Activated T-helper 1 cell treated with anti-CD3 and anti-CD28 coated beads, Interleukin-12 subunit alpha, Interleukin-12 subunit beta, Interleukin-2, Interleukin-4 antibody, amounts not matched to agents 30 ng/mL and 10 ng/mL and 1 ng/mL, durations not matched to agents 14 hours and 24 hours and 36 hours (primary cell): ENCODE measurements at regions of chr9 and their contacts with region 1.

Region 1: DNA sequence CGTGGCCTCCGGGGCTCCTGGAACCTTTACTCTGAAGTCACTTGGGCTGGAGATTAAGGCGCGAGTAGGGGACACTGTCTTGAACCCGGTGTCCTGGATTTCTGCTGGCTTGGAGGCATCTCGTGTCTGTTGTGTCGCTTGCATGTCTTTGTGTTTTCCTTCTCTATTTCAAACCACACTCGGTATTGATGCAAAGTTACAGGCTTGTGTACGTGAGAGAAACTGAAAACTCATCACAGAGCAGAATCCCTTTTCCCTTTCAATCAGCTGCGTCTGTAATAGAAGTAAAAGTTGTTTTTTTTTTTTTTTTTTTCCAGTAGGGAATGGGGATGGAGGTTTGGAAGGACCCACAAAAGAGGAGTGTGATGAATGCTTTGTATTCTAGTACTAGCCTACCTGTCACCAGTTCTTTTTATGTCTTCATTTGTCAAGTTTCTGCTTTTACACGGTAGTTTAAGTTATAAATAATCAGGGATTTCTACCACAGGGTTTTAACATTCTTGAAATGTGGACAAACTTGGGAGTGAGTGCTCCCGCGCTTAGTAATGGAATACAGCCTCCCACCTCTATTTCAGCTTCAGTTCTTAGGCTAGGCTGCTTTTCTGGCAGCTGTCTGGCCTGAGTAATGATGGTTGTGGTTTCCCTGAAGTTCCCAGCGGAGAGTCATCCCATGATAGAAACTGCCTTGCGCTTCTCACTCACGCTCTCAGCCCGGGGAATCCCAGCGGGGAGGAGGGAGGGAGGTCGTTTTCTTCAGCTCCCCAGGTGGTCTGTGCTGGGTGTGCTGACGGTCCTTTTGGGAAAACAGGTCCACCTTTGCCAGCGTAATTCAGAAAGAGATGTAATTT is 763 bp downstream of the TJP2 start:
- DNase-seq: peak; percentile 21
- H3K4me3 Mint-ChIP-seq: peak overlapping the region; percentile 82
- H3K27ac Mint-ChIP-seq: peak overlapping the region; percentile 69
- H3K4me1 Mint-ChIP-seq: peaks cover 70% of the 10 kb centered on the region
- H3K27me3 Mint-ChIP-seq: peaks cover 18% of the 10 kb centered on the region

Region 2: GRCh38 chr9:69035438-69036308 is 139.2 kb before region 1 on chr9 and contains the start of gene FXN:
- intact Hi-C with region 1: loop called (anchors 5 kb)
- DNase-seq: peak; percentile 78
- H3K4me3 Mint-ChIP-seq: peak within 1 kb of the TSS; percentile 88
- H3K27ac Mint-ChIP-seq: peak within 1 kb of the TSS; percentile 78
- H3K4me1 Mint-ChIP-seq: peaks cover 15% of the 10 kb centered on the region
- H3K27me3 Mint-ChIP-seq: no peaks in the 10 kb centered on the region
- total RNA-seq, gene FXN: 43.6 and 47.7 TPM in 2 replicates

Region 3: GRCh38 chr9:70534061-70534460 is 1359.2 kb after region 1 on chr9:
- intact Hi-C with region 1: no loop called
- DNase-seq: no peak
- H3K4me3 Mint-ChIP-seq: no peak overlapping the region
- H3K27ac Mint-ChIP-seq: no peak overlapping the region
- H3K4me1 Mint-ChIP-seq: peaks cover 15% of the 10 kb centered on the region
- H3K27me3 Mint-ChIP-seq: no peaks in the 10 kb centered on the region